ENCODE measurements at regions of chr1 and their contacts with region 1.

Region 1: GRCh38 chr1:227563324-227564201 is at the start of gene ZNF678:
- DNase-seq: peak; percentile 87 to 95
- ATAC-seq: peak; percentile 95 to 99 (median 97)
- H3K4me3 ChIP-seq: peak within 1 kb of the TSS; percentile 64 to 84 (median 76)
- H3K27ac ChIP-seq: peak within 1 kb of the TSS; percentile 64 to 90 (median 88)
- H3K4me1 ChIP-seq: peaks cover 0 to 20% (median 8%) of the 10 kb centered on the region in 9 donors
- H3K27me3 ChIP-seq: peaks cover 0 to 34% (median 33%) of the 10 kb centered on the region in 7 donors
- CTCF ChIP-seq: no peak
- total RNA-seq, gene ZNF678: 2.5 to 4.7 (median 3.5) TPM

Region 2: GRCh38 chr1:226407497-226408284 is 1155.9 kb before region 1 on chr1 and contains the start of gene PARP1:
- intact Hi-C with region 1: loop called in 1 of 10 experiments (anchors 10 kb)
- DNase-seq: peak; percentile 83 to 89
- ATAC-seq: peak; percentile 82 to 96 (median 92)
- H3K4me3 ChIP-seq: peak within 1 kb of the TSS; percentile 57 to 98 (median 87)
- H3K27ac ChIP-seq: peak within 1 kb of the TSS; percentile 33 to 93 (median 87)
- H3K4me1 ChIP-seq: peaks cover 16 to 49% (median 44%) of the 10 kb centered on the region in 9 donors
- H3K27me3 ChIP-seq: no peaks in the 10 kb centered on the region
- CTCF ChIP-seq: peak; percentile 62 to 99 (median 78)
- total RNA-seq, gene PARP1: 98.9 to 154 (median 111) TPM

Region 3: GRCh38 chr1:227728059-227728891 is 164.7 kb after region 1 on chr1:
- intact Hi-C with region 1: loop called in 4 of 10 experiments (anchors 10 kb)
- DNase-seq: peak; percentile 83 to 84
- ATAC-seq: peak; percentile 60 to 71 (median 66)
- H3K4me3 ChIP-seq: peak overlapping the region; percentile 36 to 79 (median 62)
- H3K27ac ChIP-seq: peak overlapping the region; percentile 56 to 87 (median 78)
- H3K4me1 ChIP-seq: peaks cover 10 to 41% (median 26%) of the 10 kb centered on the region in 9 donors
- H3K27me3 ChIP-seq: peaks cover 0 to 9% (median 0%) of the 10 kb centered on the region in 7 donors
- CTCF ChIP-seq: peak in 1 of 9 donors; percentile 9

Region 4: DNA sequence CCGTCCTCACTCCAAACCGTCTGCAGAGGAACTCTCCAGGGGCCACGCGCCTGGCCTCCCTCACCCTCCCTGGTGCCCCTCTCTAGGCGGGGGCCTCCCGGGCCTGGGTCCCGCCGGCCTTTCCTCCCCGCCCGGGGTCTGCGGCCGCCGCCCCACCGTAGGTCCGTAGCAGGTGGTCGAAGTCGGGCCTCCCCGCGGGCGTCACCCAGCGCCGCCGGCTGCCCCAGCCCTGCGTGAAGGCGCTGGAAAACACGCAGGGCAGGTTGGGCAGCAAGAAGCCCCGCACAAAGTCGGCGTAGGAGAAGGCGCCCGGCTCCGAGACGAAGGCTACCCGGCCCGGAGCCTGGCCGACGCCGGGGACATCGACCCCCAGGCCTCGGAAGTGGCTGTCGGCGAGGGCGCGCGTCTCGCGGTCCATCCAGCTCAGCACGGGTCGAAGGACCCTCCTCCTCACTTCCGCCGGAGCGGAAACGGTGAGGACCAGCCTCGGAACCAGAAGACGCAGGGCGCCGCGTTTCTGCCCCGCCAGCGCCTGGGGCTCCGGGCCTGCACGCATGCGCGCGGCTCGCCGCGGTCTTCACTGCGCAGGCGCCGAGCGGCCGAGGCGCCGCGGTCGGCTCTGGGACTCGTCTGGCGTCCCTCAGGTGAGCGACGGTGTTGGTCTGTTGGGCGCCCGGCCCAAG is 171.4 kb after region 1 on chr1 and contains the starts of genes JMJD4 and SNAP47:
- intact Hi-C with region 1: loop called in 3 of 10 experiments (anchors 10 kb)
- DNase-seq: peak; percentile 92 to 93
- ATAC-seq: peak; percentile 89 to 95 (median 92)
- H3K4me3 ChIP-seq: peak within 1 kb of the TSS; percentile 74 to 100 (median 92)
- H3K27ac ChIP-seq: peak within 1 kb of the TSS; percentile 70 to 96 (median 92)
- H3K4me1 ChIP-seq: peaks cover 7 to 49% (median 33%) of the 10 kb centered on the region in 9 donors
- H3K27me3 ChIP-seq: no peaks in the 10 kb centered on the region
- CTCF ChIP-seq: no peak
- total RNA-seq, gene JMJD4: 7.6 to 13.4 (median 9.9) TPM
- total RNA-seq, gene SNAP47: 23.2 to 102 (median 65.4) TPM